H1 (cell line): ENCODE measurements at regions of chr22 and their contacts with region 1.

Region 1: DNA sequence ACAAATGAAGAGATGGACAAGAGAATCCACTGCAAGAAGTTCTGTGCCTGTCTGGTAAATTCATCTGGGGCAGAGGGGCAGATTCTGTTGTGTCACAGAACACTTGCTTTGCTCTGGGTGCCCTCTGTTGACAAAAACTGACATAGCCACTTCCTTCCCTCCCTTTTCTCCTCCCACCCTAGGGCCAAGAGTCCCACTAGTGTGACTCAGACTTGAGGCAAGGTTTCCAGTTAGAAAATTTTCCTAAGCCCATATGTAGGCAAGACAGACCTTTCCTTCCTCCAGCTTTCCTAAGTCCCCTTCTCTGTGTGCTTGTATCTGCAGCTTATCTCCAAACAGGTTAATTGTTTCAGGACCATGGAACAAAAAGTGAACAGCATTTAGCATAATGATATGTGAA is 106.8 kb downstream of the RBFOX2 start:
- DNase-seq: peak in 1 of 2 experiments; percentile 59
- H3K4me3 ChIP-seq: no peak overlapping the region
- H3K27ac ChIP-seq: no peak overlapping the region
- H3K4me1 ChIP-seq: peaks cover 0 to 7% (median 0%) of the 10 kb centered on the region in 4 experiments; a peak in 1 of 7 replicates
- H3K27me3 ChIP-seq: no peaks in the 10 kb centered on the region
- CTCF ChIP-seq: peak; percentile 48 to 74 (median 70)
- EP300 ChIP-seq: no peak
- POLR2A ChIP-seq: no peak
- RAD21 ChIP-seq: peak; percentile 88 to 92

Region 2: GRCh38 chr22:35761037-35761436 is 160.7 kb before region 1 on chr22:
- CTCF ChIA-PET with region 1: interaction called, 12 read pairs
- POLR2A ChIA-PET with region 1: no interaction called
- DNase-seq: no peak
- H3K4me3 ChIP-seq: no peak overlapping the region
- H3K27ac ChIP-seq: no peak overlapping the region
- H3K4me1 ChIP-seq: no peaks in the 10 kb centered on the region
- H3K27me3 ChIP-seq: no peaks in the 10 kb centered on the region
- CTCF ChIP-seq: peak in 2 of 3 experiments; percentile 51 to 55; a peak in 3 of 4 replicates
- EP300 ChIP-seq: no peak
- POLR2A ChIP-seq: no peak
- RAD21 ChIP-seq: peak; percentile 68 to 75

Region 3: DNA sequence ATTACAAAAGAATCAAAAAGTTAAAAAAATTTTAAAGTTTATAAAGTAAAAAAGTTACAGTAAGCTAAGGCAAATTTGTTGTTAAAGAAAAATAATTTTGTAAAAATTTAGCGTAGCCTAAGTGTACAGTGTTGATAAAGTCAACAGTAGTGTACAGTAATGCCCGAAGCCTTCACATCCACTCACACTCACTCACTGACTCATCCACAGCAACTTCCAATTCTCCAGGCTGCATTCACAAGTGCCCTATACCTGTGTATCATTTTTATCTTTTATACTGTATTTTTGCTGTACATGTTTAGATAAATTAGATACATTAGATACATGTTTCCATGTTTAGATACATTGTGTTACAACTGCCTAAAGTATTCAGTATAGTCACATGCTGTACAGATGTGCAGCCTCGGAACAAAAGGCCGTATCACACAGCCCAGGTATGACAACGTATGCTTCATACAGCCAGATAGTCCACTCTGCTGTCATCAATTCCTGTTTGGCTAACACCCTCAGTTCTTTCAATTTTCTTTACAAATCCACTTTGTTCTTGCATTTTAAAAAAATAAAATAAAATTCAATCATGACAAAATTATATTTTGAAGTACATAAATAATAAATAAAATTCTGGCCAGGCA is 26.1 kb after region 1 on chr22:
- CTCF ChIA-PET with region 1: no interaction called
- POLR2A ChIA-PET with region 1: no interaction called
- DNase-seq: no peak
- H3K4me3 ChIP-seq: no peak overlapping the region
- H3K27ac ChIP-seq: no peak overlapping the region
- H3K4me1 ChIP-seq: no peaks in the 10 kb centered on the region
- H3K27me3 ChIP-seq: no peaks in the 10 kb centered on the region
- CTCF ChIP-seq: no peak
- EP300 ChIP-seq: no peak
- POLR2A ChIP-seq: no peak
- RAD21 ChIP-seq: no peak